SK-N-SH (cell line): ENCODE measurements at regions of chr13 and their contacts with region 1.

Region 1: DNA sequence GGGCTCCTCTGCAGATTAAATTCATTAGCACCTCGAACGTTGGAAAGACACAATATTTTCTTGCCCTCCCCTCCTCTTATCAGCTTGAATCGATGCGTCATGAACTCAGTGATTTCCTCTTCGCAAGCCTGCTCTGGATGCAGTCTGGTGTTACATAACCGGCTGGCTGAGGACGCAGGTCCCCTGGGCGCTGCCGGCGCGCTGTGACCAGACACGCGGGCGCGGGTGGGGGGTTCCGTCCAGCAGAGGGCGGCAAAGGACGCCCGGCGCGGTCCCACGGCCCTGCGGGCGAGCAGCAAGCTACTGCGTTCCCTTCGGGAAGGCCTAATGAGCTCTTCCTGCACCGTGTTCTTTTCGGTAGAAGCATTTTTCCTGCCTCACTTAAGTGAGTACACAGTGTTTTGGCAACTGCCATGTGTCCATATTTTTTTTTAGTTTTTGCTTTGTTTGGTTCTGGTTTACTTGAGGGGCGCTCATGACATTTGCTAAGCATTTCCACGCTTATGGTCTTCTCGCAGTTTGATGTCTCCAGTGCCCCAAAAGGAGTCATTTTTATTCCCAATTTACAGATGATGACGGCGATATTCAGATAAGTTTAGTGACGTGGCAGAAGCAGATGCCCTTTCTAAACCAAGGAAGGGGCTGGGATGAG is 112.2 kb upstream of the MBNL2 start:
- DNase-seq: peak; percentile 91
- H3K4me3 ChIP-seq: peak overlapping the region in 1 of 2 experiments; percentile 24; a peak in 2 of 4 replicates
- H3K27ac ChIP-seq: peak overlapping the region in 1 of 2 experiments; percentile 60; a peak in 1 of 4 replicates
- H3K4me1 ChIP-seq: peaks cover 24 to 36% of the 10 kb centered on the region in 2 experiments
- H3K27me3 ChIP-seq: no peaks in the 10 kb centered on the region
- CTCF ChIP-seq: peak; percentile 94
- EP300 ChIP-seq: peak; percentile 27 to 72; a peak in 2 of 4 replicates
- RAD21 ChIP-seq: peak; percentile 97

Region 2: DNA sequence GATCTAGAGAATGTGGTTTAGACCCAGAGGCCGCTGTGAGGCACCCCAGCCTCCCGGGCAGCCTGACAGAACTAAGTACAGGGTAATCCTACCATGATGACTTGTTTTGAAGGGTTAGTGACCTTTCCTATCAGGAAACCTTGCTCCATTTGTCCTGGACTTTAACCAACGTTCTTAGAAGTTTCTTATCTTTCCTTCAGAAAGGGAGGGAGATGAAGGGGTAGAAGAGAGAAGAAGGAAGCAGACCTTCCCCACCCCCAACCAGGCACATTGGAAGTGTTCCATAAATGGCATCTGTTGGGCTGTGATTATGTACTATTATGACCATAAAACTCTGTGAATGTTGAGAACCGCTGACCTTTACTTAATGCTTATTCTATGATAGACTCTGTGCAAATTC is 299.9 kb before region 1 on chr13:
- CTCF ChIA-PET with region 1: no interaction called
- POLR2A ChIA-PET with region 1: no interaction called
- DNase-seq: no peak
- H3K4me3 ChIP-seq: no peak overlapping the region
- H3K27ac ChIP-seq: no peak overlapping the region
- H3K4me1 ChIP-seq: peaks cover 0 to 6% of the 10 kb centered on the region in 2 experiments; a peak in 1 of 4 replicates
- H3K27me3 ChIP-seq: no peaks in the 10 kb centered on the region
- CTCF ChIP-seq: no peak
- EP300 ChIP-seq: no peak
- RAD21 ChIP-seq: no peak

Region 3: GRCh38 chr13:97133959-97134358 is 24.0 kb after region 1 on chr13:
- CTCF ChIA-PET with region 1: interaction called, 11 read pairs
- POLR2A ChIA-PET with region 1: no interaction called
- DNase-seq: no peak
- H3K4me3 ChIP-seq: no peak overlapping the region
- H3K27ac ChIP-seq: no peak overlapping the region
- H3K4me1 ChIP-seq: no peaks in the 10 kb centered on the region
- H3K27me3 ChIP-seq: no peaks in the 10 kb centered on the region
- CTCF ChIP-seq: no peak
- EP300 ChIP-seq: no peak
- RAD21 ChIP-seq: no peak

Region 4: DNA sequence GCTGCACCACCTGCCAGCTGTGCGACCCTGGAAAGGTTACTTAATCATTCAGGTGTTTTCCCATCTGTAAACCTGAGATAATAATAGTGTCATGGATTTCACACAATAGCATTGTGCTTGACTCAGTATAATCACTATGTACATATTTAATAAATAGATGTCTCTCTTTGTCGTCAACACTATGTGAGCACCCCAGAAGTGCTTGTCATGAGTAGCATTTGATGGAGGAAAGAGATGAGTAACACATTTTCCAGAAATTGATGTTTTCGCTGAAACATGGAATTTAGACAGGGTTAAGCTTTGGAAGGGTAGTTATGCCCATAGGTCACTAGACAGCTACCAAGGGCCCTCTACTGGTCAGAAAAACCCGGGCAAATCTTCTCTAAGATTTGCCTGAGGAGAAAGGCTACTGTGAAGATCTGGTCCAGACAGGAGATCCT is 102.7 kb after region 1 on chr13:
- CTCF ChIA-PET with region 1: interaction called, 30 read pairs
- POLR2A ChIA-PET with region 1: no interaction called
- DNase-seq: no peak
- H3K4me3 ChIP-seq: no peak overlapping the region
- H3K27ac ChIP-seq: no peak overlapping the region; a peak in 1 of 4 replicates
- H3K4me1 ChIP-seq: no peaks in the 10 kb centered on the region; a peak in 2 of 4 replicates
- H3K27me3 ChIP-seq: no peaks in the 10 kb centered on the region
- CTCF ChIP-seq: peak; percentile 71
- EP300 ChIP-seq: no peak
- RAD21 ChIP-seq: peak; percentile 57

Region 5: GRCh38 chr13:97240788-97241734 is 131.1 kb after region 1 on chr13:
- CTCF ChIA-PET with region 1: interaction called, 19 read pairs
- POLR2A ChIA-PET with region 1: no interaction called
- DNase-seq: no peak
- H3K4me3 ChIP-seq: no peak overlapping the region
- H3K27ac ChIP-seq: peak overlapping the region in 1 of 2 experiments; percentile 28; a peak in 2 of 4 replicates
- H3K4me1 ChIP-seq: peaks cover 20 to 23% of the 10 kb centered on the region in 2 experiments; a peak in 3 of 4 replicates
- H3K27me3 ChIP-seq: no peaks in the 10 kb centered on the region
- CTCF ChIP-seq: no peak
- EP300 ChIP-seq: no peak
- RAD21 ChIP-seq: no peak

Region 6: GRCh38 chr13:97333983-97334382 is 224.0 kb after region 1 on chr13:
- CTCF ChIA-PET with region 1: interaction called, 194 read pairs
- POLR2A ChIA-PET with region 1: no interaction called
- DNase-seq: no peak
- H3K4me3 ChIP-seq: no peak overlapping the region
- H3K27ac ChIP-seq: peak overlapping the region; percentile 6 to 61; a peak in 1 of 4 replicates
- H3K4me1 ChIP-seq: peaks cover under 1 to 22% of the 10 kb centered on the region in 2 experiments; a peak in 2 of 4 replicates
- H3K27me3 ChIP-seq: no peaks in the 10 kb centered on the region
- CTCF ChIP-seq: 0 out of 2 replicates have a peak, but pooled peaks have one; percentile 10
- EP300 ChIP-seq: no peak
- RAD21 ChIP-seq: no peak

Region 7: DNA sequence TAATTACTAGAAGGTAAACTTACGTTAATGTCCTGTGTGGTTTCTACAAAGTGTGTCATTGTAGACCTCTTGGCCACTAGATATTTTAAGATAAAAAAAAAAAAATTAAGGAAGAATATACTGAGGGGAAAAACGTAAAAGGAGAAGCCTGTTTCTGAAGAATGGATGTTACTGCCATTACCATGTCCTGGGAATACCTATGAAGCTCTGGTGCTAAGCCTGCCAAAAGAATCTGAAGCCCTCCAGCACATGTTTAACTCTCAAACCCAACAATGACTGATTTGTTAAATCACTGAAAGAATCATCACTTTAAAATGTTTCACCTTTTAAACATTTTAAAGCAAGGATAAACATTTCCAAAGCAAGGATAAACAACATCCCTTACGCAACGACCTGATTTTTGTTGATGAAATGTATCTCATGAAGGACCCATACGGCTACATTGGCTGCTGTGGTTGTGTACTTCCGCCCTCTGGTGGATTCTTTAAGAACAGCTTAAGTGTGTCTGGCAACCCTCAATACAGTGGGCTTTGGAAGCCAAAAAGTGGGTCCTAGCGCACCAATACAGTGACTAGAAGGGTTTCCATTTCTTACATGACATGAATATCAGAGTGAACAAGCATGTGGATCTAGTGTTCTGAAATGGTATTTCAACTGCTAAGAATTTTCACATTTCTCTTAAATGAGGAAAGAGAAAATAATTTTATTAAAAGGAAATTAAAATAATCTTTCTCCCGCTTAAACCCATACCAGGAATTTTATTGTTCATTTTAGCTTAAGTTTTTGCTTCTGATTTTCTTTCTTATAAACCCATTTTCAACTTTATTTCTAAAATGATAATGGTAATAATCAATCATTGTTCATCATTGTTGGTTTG is 249.5 kb after region 1 on chr13:
- CTCF ChIA-PET with region 1: interaction called, 222 read pairs
- POLR2A ChIA-PET with region 1: no interaction called
- DNase-seq: peak; percentile 66
- H3K4me3 ChIP-seq: no peak overlapping the region
- H3K27ac ChIP-seq: peak overlapping the region in 1 of 2 experiments; percentile 31; a peak in 2 of 4 replicates
- H3K4me1 ChIP-seq: peaks cover 0 to 4% of the 10 kb centered on the region in 2 experiments; a peak in 1 of 4 replicates
- H3K27me3 ChIP-seq: no peaks in the 10 kb centered on the region
- CTCF ChIP-seq: peak; percentile 92
- EP300 ChIP-seq: no peak
- RAD21 ChIP-seq: peak; percentile 89